Activated CD4-positive, alpha-beta T cell treated with anti-CD3 and anti-CD28 coated beads for 36 hours (primary cell): ENCODE measurements at regions of chr10 and their contacts with region 1.

Region 1: DNA sequence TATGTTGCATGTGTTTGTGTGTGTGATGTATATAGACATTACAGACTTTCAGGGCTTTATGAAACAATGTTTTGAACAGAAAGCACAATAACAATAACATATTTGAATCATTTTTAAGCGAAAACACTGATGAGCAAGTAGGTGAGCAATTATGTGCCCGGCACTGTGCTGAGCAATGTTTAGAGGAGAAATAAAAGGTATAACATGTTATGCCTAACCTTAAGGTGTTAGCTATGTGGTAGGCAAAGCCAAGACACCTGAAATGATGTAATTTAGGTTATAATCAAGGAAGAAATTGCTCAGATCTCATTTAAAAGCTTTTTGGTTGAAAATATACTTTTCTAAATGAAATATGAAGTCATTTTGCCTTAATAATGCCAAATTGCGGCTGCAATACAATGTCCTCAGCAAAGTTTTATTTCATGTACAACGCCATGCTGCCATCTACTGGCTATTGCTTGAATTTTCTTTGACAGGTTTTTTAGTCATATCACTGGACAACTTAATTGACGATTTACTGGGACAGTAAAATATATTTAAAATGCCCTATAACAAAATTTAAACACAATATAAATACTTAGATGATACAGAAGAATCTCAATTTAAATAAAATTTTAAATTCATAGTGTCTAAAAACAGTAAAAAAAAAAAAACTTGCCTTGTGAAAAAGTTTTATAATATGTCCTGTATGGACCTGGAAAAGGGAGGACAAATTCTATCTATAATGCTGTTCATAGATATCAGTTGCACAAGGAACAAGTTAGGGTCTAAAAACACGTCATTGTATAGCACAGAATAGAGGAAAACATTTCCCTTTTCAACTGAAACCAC is 131.1 kb upstream of the CDK1 start:
- DNase-seq: peak; percentile 59
- ATAC-seq: peak; percentile 54
- H3K4me3 Mint-ChIP-seq: no peak overlapping the region
- H3K27ac Mint-ChIP-seq: no peak overlapping the region
- H3K4me1 Mint-ChIP-seq: peaks cover 37% of the 10 kb centered on the region
- H3K27me3 Mint-ChIP-seq: no peaks in the 10 kb centered on the region

Region 2: DNA sequence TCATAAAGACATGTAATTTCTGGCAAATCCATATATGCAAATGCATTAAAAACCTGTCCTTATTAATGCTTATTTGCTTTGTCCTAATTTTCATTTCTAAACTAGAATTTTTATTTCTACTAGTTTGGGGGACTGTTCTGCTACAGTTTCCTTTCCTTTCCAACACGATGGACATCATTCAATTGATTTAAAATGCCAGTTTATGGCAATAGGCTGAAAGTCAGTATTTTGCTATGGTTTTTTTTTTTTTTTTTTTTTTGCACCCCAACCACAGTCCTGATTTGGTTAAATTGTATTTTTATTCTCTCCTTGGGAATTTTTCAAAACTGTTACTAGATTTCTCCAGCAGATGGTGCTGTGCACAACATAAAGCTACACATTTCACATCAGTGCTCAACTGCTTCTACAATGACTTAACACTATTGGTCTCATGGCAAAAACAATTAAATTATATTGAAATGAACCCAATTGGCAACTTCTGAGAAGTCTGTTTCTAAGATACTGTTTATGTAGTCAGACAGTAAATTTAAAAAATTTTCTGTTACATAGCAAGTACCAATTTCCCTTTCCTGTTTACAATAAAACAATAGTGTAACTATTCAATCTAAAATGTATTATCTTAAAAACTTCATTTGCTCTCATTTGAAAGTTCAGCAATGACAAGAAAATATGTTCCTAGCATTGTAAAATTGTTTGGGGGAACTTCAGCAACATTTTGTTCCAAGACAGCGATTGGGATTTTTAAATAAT is 547.0 kb before region 1 on chr10:
- CTCF ChIA-PET with region 1: no interaction called
- POLR2A ChIA-PET with region 1: no interaction called
- intact Hi-C with region 1: loop called (anchors 1 kb)
- DNase-seq: no peak
- ATAC-seq: no peak
- H3K4me3 Mint-ChIP-seq: no peak overlapping the region
- H3K27ac Mint-ChIP-seq: no peak overlapping the region
- H3K4me1 Mint-ChIP-seq: no peaks in the 10 kb centered on the region
- H3K27me3 Mint-ChIP-seq: no peaks in the 10 kb centered on the region

Region 3: GRCh38 chr10:60208676-60209269 is 438.4 kb before region 1 on chr10:
- CTCF ChIA-PET with region 1: interaction called, 6 read pairs
- POLR2A ChIA-PET with region 1: no interaction called
- intact Hi-C with region 1: loop called (anchors 2 to 5 kb)
- DNase-seq: no peak
- ATAC-seq: no peak
- H3K4me3 Mint-ChIP-seq: no peak overlapping the region
- H3K27ac Mint-ChIP-seq: no peak overlapping the region
- H3K4me1 Mint-ChIP-seq: peaks cover 15% of the 10 kb centered on the region
- H3K27me3 Mint-ChIP-seq: no peaks in the 10 kb centered on the region

Region 4: GRCh38 chr10:60444494-60445064 is 202.6 kb before region 1 on chr10:
- CTCF ChIA-PET with region 1: interaction called, 91 read pairs
- POLR2A ChIA-PET with region 1: no interaction called
- intact Hi-C with region 1: loop called (anchors 1 kb)
- DNase-seq: no peak
- ATAC-seq: no peak
- H3K4me3 Mint-ChIP-seq: no peak overlapping the region
- H3K27ac Mint-ChIP-seq: no peak overlapping the region
- H3K4me1 Mint-ChIP-seq: peaks cover 29% of the 10 kb centered on the region
- H3K27me3 Mint-ChIP-seq: no peaks in the 10 kb centered on the region

Region 5: GRCh38 chr10:60572511-60573194 is 74.5 kb before region 1 on chr10:
- CTCF ChIA-PET with region 1: interaction called, 12 read pairs
- POLR2A ChIA-PET with region 1: no interaction called
- intact Hi-C with region 1: no loop called
- DNase-seq: peak; percentile 71
- ATAC-seq: peak; percentile 62
- H3K4me3 Mint-ChIP-seq: peak overlapping the region; percentile 78
- H3K27ac Mint-ChIP-seq: peak overlapping the region; percentile 93
- H3K4me1 Mint-ChIP-seq: peaks cover 54% of the 10 kb centered on the region
- H3K27me3 Mint-ChIP-seq: no peaks in the 10 kb centered on the region

Region 6: GRCh38 chr10:60769406-60769805 is 122.2 kb after region 1 on chr10:
- CTCF ChIA-PET with region 1: interaction called, 10 read pairs
- POLR2A ChIA-PET with region 1: interaction called, 3 read pairs
- intact Hi-C with region 1: loop called (anchors 2 kb)
- DNase-seq: no peak
- ATAC-seq: no peak
- H3K4me3 Mint-ChIP-seq: no peak overlapping the region
- H3K27ac Mint-ChIP-seq: no peak overlapping the region
- H3K4me1 Mint-ChIP-seq: peaks cover 13% of the 10 kb centered on the region
- H3K27me3 Mint-ChIP-seq: no peaks in the 10 kb centered on the region